ENCODE measurements at regions of chr20 and their contacts with region 1.

Region 1: GRCh38 chr20:49982346-49983122 is at the start of gene SNAI1:
- DNase-seq: peak; percentile 91 to 98 (median 94)
- ATAC-seq: peak; percentile 87
- H3K4me3 ChIP-seq: peak within 1 kb of the TSS; percentile 92
- H3K27ac ChIP-seq: peak within 1 kb of the TSS; percentile 89
- H3K4me1 ChIP-seq: peaks cover 63 to 64% of the 10 kb centered on the region in 2 experiments
- H3K27me3 ChIP-seq: no peaks in the 10 kb centered on the region
- CTCF ChIP-seq: peak; percentile 65 to 78 (median 68)
- EP300 ChIP-seq: peak; percentile 23; the same call in 1 of the 2 replicates
- POLR2A ChIP-seq: peak; percentile 99
- RAD21 ChIP-seq: peak; percentile 81 to 83
- polyA plus RNA-seq, gene SNAI1: 0.32 to 0.80 TPM

Region 2: GRCh38 chr20:49713753-49714712 is 268.5 kb before region 1 on chr20 and contains the start of gene B4GALT5:
- CTCF ChIA-PET with region 1: no interaction called
- POLR2A ChIA-PET with region 1: no interaction called
- in situ Hi-C with region 1: no loop called
- intact Hi-C with region 1: no loop called
- DNase-seq: peak; percentile 87 to 94 (median 90)
- ATAC-seq: peak; percentile 86
- H3K4me3 ChIP-seq: peak within 1 kb of the TSS; percentile 78
- H3K27ac ChIP-seq: peak within 1 kb of the TSS; percentile 86
- H3K4me1 ChIP-seq: peaks cover 18 to 21% of the 10 kb centered on the region in 2 experiments; a peak in 3 of 5 replicates
- H3K27me3 ChIP-seq: no peaks in the 10 kb centered on the region
- CTCF ChIP-seq: no peak
- EP300 ChIP-seq: 0 out of 2 replicates have a peak, but pooled peaks have one; percentile 6
- POLR2A ChIP-seq: 0 out of 2 replicates have a peak, but pooled peaks have one; percentile 28
- RAD21 ChIP-seq: no peak
- polyA plus RNA-seq, gene B4GALT5: 12.2 to 17.5 TPM

Region 3: DNA sequence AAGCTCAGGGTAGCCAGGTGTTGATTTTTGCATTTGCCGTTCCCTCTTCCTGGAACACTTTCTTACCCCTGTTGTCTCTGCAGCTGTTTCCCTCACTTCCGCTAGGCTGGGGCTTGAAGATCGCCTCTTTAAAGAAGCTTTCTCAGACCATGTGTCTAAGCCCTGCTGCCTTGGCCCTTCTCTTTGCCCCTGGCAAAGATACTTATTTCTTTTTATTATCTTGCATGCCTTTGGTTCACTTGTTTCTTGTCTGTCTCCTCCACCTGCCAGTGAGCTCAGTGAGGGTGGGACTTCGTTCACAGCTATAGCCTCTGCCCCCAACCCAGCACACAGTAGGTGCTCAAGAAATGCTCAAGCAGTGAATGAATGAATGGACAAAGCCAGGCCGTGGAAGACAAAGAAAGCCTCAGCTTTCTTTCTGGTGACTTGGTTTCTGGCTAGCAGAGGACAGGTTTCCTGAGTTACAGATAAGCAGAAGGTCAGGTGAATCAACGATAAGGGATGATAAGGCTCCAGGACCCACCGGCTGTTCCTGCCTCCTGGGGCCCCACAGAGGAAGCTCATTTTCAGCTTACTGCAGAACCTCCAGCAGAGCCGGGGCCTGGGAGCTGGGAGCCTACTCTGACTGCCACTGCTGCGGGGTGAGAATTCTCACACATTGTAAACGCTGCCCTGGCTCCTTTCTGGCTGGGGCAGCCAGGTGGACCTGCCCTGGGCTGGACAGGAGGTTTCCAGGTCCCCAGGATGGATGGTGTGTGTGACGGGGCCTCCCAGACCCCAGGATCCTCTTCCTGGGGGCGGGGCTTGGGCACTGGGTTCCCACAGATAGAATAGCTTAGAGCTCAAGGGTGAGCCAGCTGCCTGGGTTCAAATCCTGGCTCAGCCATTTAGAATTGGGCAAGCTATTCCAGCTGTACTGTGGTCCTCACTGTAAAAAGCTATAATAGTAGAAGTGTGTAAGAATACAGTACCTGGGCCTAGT is 30.0 kb after region 1 on chr20:
- CTCF ChIA-PET with region 1: no interaction called
- POLR2A ChIA-PET with region 1: interaction called, 40 read pairs
- in situ Hi-C with region 1: no loop called
- intact Hi-C with region 1: no loop called
- DNase-seq: peak; percentile 78 to 88 (median 85)
- ATAC-seq: peak; percentile 80
- H3K4me3 ChIP-seq: peak overlapping the region; percentile 27
- H3K27ac ChIP-seq: peak overlapping the region; percentile 54
- H3K4me1 ChIP-seq: peaks cover 39 to 49% of the 10 kb centered on the region in 2 experiments
- H3K27me3 ChIP-seq: no peaks in the 10 kb centered on the region
- CTCF ChIP-seq: no peak
- EP300 ChIP-seq: peak; percentile 83
- POLR2A ChIP-seq: no peak
- RAD21 ChIP-seq: no peak

Region 4: GRCh38 chr20:50070991-50071888 is 88.7 kb after region 1 on chr20:
- CTCF ChIA-PET with region 1: interaction called, 100 read pairs
- POLR2A ChIA-PET with region 1: interaction called, 74 read pairs
- in situ Hi-C with region 1: loop called (anchors 5 kb)
- intact Hi-C with region 1: loop called (anchors 1 kb)
- DNase-seq: peak; percentile 92 to 96 (median 94)
- ATAC-seq: peak; percentile 99
- H3K4me3 ChIP-seq: peak overlapping the region; percentile 27
- H3K27ac ChIP-seq: peak overlapping the region; percentile 50; the same call in 2 of the 3 replicates
- H3K4me1 ChIP-seq: peaks cover 2 to 27% of the 10 kb centered on the region in 2 experiments; a peak in 4 of 5 replicates
- H3K27me3 ChIP-seq: no peaks in the 10 kb centered on the region
- CTCF ChIP-seq: peak; percentile 98 to 99 (median 99)
- EP300 ChIP-seq: 0 out of 2 replicates have a peak, but pooled peaks have one; percentile 28
- POLR2A ChIP-seq: 0 out of 2 replicates have a peak, but pooled peaks have one; percentile 38
- RAD21 ChIP-seq: peak; percentile 99 to 100

Region 5: DNA sequence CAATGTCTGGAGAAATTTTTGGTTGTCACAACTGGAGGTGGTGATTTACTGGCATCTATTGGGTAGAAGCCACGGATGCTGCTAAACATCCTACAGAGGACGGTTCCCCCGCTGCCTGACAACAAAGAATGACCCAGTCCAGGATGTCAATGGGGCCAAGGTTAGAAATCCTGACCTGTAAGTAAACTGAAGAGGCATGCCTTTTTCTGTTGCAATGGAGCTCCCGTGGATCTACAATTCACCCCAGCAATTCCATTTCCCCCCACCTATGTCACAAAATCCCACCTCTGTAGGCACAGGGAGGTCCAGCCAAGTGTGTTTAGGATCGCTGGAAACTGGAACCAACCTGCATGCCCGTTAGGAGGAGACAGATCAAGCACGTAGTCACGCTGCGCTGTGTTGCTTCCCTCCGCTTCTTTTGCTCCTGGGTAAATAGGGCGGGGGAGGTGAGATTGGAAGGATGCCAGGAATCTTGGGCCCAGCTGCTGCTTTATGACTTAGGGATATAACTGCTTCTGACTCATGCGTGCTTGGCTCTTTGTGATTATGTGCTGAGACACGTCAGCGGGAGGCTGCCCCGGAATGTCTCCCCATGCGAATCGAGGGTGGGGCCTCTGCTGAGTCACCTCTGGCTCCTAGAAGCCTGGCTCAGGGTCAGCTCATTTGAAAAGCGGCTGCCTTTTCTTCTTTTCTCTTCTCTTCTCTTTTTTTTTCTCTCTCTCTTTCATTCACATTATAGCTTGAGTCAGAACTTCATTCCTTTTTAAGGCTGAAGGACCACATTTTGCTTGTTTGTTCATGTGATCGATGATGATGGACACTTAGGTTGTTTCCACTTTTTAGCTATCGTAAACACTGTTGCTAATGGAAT is 183.4 kb after region 1 on chr20:
- CTCF ChIA-PET with region 1: interaction called, 13 read pairs
- POLR2A ChIA-PET with region 1: interaction called, 5 read pairs
- in situ Hi-C with region 1: loop called (anchors 5 kb)
- intact Hi-C with region 1: loop called (anchors 2 kb)
- DNase-seq: peak; percentile 95 to 99 (median 96)
- ATAC-seq: peak; percentile 97
- H3K4me3 ChIP-seq: peak overlapping the region; percentile 37
- H3K27ac ChIP-seq: peak overlapping the region; percentile 91
- H3K4me1 ChIP-seq: peaks cover 31 to 34% of the 10 kb centered on the region in 2 experiments; a peak in 4 of 5 replicates
- H3K27me3 ChIP-seq: no peaks in the 10 kb centered on the region
- CTCF ChIP-seq: peak in 2 of 3 experiments; percentile 13 to 15; a peak in 1 of 6 replicates
- EP300 ChIP-seq: peak; percentile 95
- POLR2A ChIP-seq: peak; percentile 75
- RAD21 ChIP-seq: 0 out of 4 replicates have a peak, but pooled peaks of 1 of the 2 experiments have one; percentile 3

Region 6: GRCh38 chr20:50460460-50461267 is 478.1 kb after region 1 on chr20:
- CTCF ChIA-PET with region 1: no interaction called
- POLR2A ChIA-PET with region 1: no interaction called
- in situ Hi-C with region 1: loop called (anchors 5 kb)
- intact Hi-C with region 1: loop called (anchors 10 kb)
- DNase-seq: peak; percentile 86 to 88 (median 87)
- ATAC-seq: peak; percentile 96
- H3K4me3 ChIP-seq: no peak overlapping the region
- H3K27ac ChIP-seq: no peak overlapping the region; the same call in 2 of the 3 replicates
- H3K4me1 ChIP-seq: peaks cover 24 to 26% of the 10 kb centered on the region in 2 experiments
- H3K27me3 ChIP-seq: no peaks in the 10 kb centered on the region; a peak in 1 of 5 replicates
- CTCF ChIP-seq: peak; percentile 92 to 96 (median 94)
- EP300 ChIP-seq: no peak
- POLR2A ChIP-seq: no peak
- RAD21 ChIP-seq: peak; percentile 96 to 98

Measured in K562 (cell line).